Breast epithelium (tissue), 4 donors: ENCODE measurements at regions of chr6 and their contacts with region 1.

Region 1: GRCh38 chr6:160534050-160534696 is 129.9 kb downstream of the LPA start:
- DNase-seq: peak; percentile 30 to 55
- H3K4me3 ChIP-seq: peak overlapping the region in 2 of 3 donors; percentile 1 to 49
- H3K27ac ChIP-seq: no peak overlapping the region
- H3K4me1 ChIP-seq: no peaks in the 10 kb centered on the region
- H3K27me3 ChIP-seq: no peaks in the 10 kb centered on the region
- CTCF ChIP-seq: peak; percentile 54 to 79 (median 64)
- POLR2A ChIP-seq: no peak

Region 2: DNA sequence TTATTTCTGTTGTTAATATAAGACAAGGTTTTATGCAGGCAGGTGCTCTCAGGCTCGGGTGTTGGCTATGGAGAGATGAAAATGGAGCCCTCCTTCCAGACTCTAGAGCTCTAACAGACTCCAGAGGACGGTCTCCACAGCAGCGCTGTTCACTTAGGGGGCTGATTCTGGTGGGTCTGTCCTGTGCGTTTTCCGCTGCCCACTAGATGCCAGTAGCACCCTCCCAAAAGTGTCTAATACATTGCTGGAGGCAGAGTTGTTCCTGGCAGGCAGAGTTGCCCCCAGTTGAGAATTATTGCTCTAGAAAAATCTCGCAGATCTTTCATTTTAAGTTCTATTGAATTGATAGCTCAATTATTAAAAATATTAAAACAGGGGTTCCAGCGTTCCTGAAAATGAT is 567.3 kb after region 1 on chr6:
- intact Hi-C with region 1: loop called (anchors 10 kb)
- DNase-seq: no peak
- H3K4me3 ChIP-seq: no peak overlapping the region
- H3K27ac ChIP-seq: no peak overlapping the region
- H3K4me1 ChIP-seq: no peaks in the 10 kb centered on the region
- H3K27me3 ChIP-seq: no peaks in the 10 kb centered on the region
- CTCF ChIP-seq: no peak
- POLR2A ChIP-seq: no peak

Region 3: GRCh38 chr6:162198925-162199324 is 1664.8 kb after region 1 on chr6:
- intact Hi-C with region 1: no loop called
- DNase-seq: no peak
- H3K4me3 ChIP-seq: no peak overlapping the region
- H3K27ac ChIP-seq: no peak overlapping the region
- H3K4me1 ChIP-seq: no peaks in the 10 kb centered on the region
- H3K27me3 ChIP-seq: no peaks in the 10 kb centered on the region
- CTCF ChIP-seq: no peak
- POLR2A ChIP-seq: no peak